GM10248 (cell line): ENCODE measurements at regions of chr17 and their contacts with region 1.

Region 1: GRCh38 chr17:45385331-45385997 is 47.2 kb downstream of the ARHGAP27 start:
- DNase-seq: peak; percentile 89
- CTCF ChIP-seq: peak; percentile 96

Region 2: DNA sequence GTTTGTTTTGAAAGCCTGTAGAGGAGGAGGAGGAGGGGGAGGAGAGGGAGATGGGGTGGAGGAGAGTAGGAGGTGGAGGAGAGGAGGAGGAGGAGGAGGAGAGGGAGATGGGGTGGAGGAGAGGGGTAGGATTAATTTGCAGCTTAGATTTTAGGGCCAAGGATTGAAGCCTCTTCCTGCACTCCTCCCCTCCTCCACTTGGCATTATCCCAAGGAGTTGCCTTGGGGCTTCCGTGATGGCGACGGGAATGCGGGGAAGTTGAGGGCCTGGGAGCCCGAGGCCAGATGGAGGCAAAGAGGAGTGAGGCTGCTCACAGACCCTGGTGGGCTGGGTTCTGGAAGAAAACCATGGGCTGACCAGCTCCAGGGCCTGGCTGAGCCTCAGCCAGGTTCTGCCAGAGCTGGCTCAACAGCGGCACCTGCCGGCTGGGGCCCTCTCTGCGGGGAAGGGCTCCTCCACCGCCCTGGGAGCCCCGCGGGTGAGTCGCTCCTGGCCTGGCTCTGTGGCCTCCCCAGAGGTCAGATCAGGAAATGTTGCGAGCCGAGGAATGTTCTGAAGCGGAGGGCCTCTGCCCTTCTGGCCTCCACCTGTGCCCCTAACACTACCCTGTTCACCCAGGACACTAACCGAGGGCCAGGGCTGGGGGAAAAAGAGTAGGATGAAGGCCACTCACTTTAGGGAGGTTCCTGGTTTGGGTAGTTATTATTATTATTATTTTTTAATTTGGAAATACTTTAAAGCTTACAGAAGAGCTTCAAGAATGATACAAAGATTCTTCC is 187.7 kb before region 1 on chr17:
- CTCF ChIA-PET with region 1: interaction called, 11 read pairs
- POLR2A ChIA-PET with region 1: no interaction called
- DNase-seq: peak; percentile 92
- CTCF ChIP-seq: peak; percentile 94

Region 3: DNA sequence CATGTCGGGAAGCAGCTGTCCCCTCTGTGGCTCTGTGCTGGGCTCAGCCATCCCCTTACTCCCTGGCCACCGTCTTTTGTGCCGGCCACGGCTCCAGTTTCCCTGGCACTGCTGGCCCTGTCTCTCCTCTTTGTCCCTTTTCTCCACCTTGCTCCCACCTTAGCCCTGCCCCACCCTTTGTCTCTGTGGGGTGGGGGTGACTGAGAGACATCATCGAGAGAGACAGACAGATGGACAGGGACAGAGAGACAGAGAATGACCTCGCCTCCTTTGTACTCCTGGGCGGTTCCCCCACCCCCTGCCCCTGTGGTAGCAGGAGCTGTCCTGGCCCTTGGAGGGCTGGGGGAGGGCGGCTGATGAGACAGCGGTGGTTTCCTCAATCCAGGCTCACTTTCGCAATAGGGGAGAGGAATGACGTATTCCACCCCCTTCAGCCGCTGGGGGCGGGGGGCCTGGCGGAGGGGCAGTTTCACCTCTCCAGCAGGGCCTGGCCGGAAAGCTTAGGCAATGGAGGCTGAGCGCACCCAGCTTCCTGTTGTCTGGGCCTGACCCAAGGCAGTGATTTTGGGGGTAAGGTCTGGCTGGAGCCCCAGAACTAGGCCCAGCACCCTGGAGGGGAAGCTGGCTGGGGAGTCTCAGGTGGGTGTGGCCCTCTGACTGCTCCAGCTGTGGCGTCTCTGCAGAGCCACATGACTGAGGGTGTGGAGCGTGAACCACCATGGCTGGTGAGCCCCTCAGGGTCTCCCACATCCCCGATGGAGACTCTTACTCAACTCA is 156.5 kb before region 1 on chr17:
- CTCF ChIA-PET with region 1: interaction called, 29 read pairs
- POLR2A ChIA-PET with region 1: no interaction called
- DNase-seq: peak; percentile 86
- CTCF ChIP-seq: no peak

Region 4: GRCh38 chr17:45261577-45262515 is 123.6 kb before region 1 on chr17 and contains the start of gene SPATA32:
- CTCF ChIA-PET with region 1: interaction called, 10 read pairs
- POLR2A ChIA-PET with region 1: no interaction called
- DNase-seq: peak; percentile 81
- CTCF ChIP-seq: no peak

Region 5: DNA sequence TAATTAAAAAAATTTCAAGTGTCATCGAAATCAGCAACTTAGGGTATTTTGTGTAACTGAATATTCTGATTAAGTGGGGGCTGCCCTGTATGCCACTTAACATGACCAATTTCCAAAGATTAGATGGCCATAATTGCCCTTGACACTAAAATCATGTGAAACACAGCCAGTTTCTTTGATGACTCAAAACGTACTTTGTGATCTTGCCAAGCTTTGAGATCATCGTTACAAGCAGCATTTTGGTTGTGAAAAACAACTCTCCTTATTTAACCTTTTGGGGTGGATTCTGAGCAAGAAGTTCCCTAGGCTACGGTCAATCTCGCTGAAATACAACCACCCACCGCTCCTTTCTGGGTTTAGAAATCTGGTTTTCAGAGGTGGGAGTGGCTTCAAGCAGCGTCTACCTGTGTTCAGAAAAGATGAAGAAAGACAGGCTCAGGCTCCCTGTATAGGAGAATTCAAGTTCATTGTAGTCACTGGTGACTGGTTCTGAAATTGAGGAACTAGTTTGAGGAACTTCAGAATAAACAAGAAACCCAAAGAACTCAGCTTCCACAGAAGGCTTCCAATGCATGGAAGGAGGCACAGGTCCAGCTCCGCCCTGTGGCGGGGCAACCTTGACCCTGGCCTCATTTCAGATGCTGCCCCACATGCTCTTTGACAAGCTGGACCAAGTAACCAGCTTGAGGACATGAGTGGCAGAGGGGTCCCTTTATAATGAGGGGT is 78.0 kb before region 1 on chr17:
- CTCF ChIA-PET with region 1: interaction called, 30 read pairs
- POLR2A ChIA-PET with region 1: interaction called, 3 read pairs
- DNase-seq: peak; percentile 66
- CTCF ChIP-seq: no peak

Region 6: DNA sequence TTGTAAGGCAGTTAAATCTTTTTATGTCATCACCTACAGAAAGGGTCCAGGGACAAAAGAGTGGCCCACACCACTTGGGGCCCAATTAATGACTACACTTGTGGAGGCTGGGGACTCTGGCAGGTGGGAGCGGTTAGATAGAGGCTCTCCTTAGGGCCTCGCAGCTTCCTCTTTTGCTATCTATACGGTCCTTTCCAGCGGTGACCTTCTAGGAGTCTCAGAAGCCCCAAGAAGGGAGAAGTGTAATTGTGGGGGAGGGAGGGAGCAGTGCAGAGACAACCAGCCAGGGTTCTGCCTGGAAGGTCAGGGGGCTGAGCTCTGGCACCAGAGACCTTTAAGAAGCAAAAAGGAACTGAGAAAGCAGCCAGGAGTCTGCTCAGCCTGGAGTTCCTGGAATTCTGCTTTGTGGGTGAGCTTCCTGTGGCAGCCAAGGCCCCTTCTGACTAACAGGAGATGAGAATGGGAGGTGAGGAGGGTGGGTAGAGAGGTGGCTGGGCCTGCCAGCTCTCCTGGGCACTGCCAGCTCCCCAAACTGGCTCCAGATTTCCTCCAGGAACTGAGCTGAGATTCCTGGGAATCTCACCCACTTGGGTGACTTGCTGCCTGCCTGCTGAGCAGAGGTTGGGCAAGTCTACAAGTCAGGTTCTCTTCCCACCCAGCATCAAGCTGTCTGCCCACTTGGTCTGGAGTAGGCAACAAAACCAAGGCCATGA is 52.3 kb before region 1 on chr17:
- CTCF ChIA-PET with region 1: interaction called, 10 read pairs
- POLR2A ChIA-PET with region 1: no interaction called
- DNase-seq: peak; percentile 72
- CTCF ChIP-seq: no peak